Cardiac septum (tissue), 1 donor: ENCODE measurements at regions of chr19 and their contacts with region 1.

Region 1: GRCh38 chr19:54677217-54677616 is 14.4 kb downstream of the LILRB4 start:
- DNase-seq: no peak

Region 2: DNA sequence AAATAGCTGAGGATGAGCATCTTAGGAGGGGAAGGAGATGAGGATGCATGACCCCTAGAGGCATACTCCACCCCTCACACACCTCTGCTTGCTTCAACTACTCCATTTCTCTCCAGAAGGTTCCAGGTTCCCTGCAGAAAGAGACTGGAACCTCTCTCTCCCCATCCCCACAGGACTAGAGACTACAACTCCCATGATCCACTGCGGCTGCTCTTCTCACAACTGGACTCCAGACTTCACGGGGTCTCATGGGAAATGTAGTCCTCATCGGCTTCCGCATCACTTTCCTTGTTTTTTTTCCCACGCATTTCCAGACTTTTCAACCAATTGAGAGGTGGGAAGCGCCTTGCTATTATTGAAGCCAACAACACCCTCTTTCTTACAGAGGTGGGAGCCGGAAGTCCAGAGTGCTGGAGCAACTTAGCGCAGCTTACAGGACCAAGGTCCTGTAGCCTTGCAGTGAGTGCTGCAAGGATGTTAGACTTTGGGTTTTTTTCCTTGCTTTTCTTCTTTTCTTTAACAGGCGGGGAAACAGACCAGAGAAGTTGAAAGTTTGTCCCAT is 699.7 kb before region 1 on chr19:
- intact Hi-C with region 1: no loop called
- DNase-seq: peak; percentile 83

Region 3: GRCh38 chr19:54481322-54481930 is 195.8 kb before region 1 on chr19:
- intact Hi-C with region 1: loop called (anchors 5 kb)
- DNase-seq: no peak

Region 4: DNA sequence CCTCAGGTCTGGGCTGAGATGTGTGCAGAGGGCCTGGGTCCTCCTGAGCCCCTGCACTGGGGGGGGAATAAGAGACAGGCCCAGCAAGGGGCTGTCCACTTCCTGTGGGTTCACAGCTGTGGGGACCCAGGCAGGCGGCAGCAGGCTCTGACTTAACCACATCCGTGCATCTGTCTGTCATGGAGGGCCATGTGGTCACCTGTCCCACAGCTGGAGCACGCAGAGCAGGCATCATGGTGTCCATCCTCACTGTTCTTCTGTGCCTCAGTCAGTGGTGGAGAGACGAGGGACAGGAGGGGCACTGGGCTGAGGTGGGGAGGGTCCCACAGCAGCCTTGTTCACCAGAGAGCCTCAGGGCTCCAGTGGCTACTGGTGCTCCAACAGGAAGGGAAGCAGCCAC is 30.7 kb after region 1 on chr19:
- intact Hi-C with region 1: no loop called
- DNase-seq: no peak